Gastrocnemius medialis (tissue), 4 donors: ENCODE measurements at regions of chr4 and their contacts with region 1.

Region 1: DNA sequence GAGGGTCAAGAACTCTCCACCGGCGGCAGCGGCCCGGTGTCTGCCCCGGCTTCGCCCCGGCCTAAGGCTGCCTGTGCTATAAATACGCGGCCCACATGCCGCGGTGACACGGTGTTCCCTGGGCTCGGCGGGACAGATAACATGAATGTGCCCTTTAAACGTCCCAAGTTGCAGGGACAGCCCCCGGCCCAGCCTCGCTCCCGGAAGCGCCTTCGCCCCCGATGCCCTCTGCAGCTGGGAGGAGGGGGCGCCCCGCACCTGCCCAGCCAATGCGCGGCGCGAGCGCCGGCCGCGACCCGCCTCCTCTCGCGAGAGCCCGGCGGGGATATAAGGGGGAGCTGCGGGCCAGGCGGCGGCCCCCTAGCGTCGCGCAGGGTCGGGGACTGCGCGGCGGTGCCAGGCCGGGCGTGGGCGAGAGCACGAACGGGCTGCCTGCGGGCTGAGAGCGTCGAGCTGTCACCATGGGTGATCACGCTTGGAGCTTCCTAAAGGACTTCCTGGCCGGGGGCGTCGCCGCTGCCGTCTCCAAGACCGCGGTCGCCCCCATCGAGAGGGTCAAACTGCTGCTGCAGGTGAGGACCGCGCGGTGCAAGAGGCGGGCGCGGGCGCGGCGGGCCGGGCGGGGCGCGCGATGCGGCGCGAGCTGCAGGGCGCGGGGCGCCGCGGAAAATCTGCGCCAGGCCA is at the start of gene SLC25A4:
- DNase-seq: peak; percentile 82 to 92
- ATAC-seq: peak; percentile 71 to 77
- H3K4me3 ChIP-seq: peak within 1 kb of the TSS; percentile 72 to 81 (median 74)
- H3K27ac ChIP-seq: peak within 1 kb of the TSS; percentile 94 to 99 (median 97)
- H3K4me1 ChIP-seq: peaks cover 74 to 75% of the 10 kb centered on the region in 2 donors
- H3K27me3 ChIP-seq: no peaks in the 10 kb centered on the region
- CTCF ChIP-seq: peak in 4 of 5 experiments; percentile 55 to 77 (median 66)
- POLR2A ChIP-seq: peak; percentile 99 to 100
- total RNA-seq, gene SLC25A4: 360 to 914 (median 389) TPM

Region 2: GRCh38 chr4:184649026-184649970 is 493.8 kb before region 1 on chr4 and contains the starts of genes CASP3 and PRIMPOL:
- in situ Hi-C with region 1: no loop called
- intact Hi-C with region 1: loop called (anchors 1 kb)
- DNase-seq: peak; percentile 93 to 95
- ATAC-seq: peak; percentile 80 to 86
- H3K4me3 ChIP-seq: peak within 1 kb of the TSS; percentile 66 to 98 (median 82)
- H3K27ac ChIP-seq: peak within 1 kb of the TSS; percentile 89 to 100 (median 98)
- H3K4me1 ChIP-seq: peaks cover 46 to 54% of the 10 kb centered on the region in 2 donors
- H3K27me3 ChIP-seq: no peaks in the 10 kb centered on the region
- CTCF ChIP-seq: peak in 2 of 5 experiments; percentile 29 to 45
- POLR2A ChIP-seq: peak; percentile 86 to 92
- total RNA-seq, gene CASP3: 16.9 to 25.5 (median 20.8) TPM
- total RNA-seq, gene PRIMPOL: 5.9 to 11.1 (median 10.7) TPM

Region 3: GRCh38 chr4:184688447-184688846 is 454.6 kb before region 1 on chr4:
- in situ Hi-C with region 1: no loop called
- intact Hi-C with region 1: no loop called
- DNase-seq: no peak
- ATAC-seq: no peak
- H3K4me3 ChIP-seq: no peak overlapping the region
- H3K27ac ChIP-seq: no peak overlapping the region
- H3K4me1 ChIP-seq: no peaks in the 10 kb centered on the region
- H3K27me3 ChIP-seq: no peaks in the 10 kb centered on the region
- CTCF ChIP-seq: no peak
- POLR2A ChIP-seq: no peak

Region 4: DNA sequence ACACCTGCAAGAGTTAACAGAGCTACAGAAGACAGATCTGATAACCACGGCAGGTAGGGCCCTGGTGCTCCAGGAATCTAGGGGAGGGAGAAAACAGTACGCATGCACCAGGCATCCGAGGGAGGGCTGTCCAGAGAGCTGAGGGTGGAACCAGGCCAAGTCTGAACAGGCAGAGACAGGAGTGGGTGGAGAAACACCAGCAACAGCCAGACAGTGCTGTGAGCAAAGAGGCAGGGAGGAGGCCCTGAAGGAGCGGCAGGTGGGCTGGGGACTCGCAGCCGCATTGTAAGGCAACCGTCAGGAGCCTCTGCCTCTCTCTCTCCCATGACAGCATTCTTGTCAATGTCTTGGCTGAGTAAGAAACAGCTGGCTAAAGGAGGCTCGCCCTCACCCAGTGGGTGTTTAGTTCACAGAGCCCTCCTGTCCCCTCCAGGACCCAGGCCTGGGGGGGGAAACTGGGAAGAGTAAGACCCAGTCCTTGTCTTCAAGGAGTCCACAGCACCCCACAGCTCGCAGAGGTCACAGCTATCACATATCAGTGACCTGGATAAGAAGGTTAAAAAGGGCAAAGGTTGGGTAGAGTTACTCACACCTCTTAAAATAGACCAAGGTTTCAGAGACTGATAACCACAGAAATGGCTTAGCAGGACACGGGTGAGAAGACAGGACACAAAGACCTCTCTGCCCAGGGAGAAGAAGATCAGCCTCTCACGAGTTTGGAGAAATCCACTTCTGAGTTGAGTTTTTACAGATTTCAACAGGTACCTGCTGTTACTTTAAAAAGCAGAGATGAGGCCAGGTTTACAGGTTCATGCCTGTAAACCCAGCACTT is 327.8 kb before region 1 on chr4:
- in situ Hi-C with region 1: no loop called
- intact Hi-C with region 1: loop called (anchors 5 kb)
- DNase-seq: peak; percentile 89 to 96
- ATAC-seq: peak; percentile 33 to 41
- H3K4me3 ChIP-seq: peak overlapping the region; percentile 32 to 55 (median 46)
- H3K27ac ChIP-seq: peak overlapping the region; percentile 97 to 100 (median 98)
- H3K4me1 ChIP-seq: peaks cover 65 to 80% of the 10 kb centered on the region in 2 donors
- H3K27me3 ChIP-seq: no peaks in the 10 kb centered on the region
- CTCF ChIP-seq: no peak
- POLR2A ChIP-seq: no peak

Region 5: DNA sequence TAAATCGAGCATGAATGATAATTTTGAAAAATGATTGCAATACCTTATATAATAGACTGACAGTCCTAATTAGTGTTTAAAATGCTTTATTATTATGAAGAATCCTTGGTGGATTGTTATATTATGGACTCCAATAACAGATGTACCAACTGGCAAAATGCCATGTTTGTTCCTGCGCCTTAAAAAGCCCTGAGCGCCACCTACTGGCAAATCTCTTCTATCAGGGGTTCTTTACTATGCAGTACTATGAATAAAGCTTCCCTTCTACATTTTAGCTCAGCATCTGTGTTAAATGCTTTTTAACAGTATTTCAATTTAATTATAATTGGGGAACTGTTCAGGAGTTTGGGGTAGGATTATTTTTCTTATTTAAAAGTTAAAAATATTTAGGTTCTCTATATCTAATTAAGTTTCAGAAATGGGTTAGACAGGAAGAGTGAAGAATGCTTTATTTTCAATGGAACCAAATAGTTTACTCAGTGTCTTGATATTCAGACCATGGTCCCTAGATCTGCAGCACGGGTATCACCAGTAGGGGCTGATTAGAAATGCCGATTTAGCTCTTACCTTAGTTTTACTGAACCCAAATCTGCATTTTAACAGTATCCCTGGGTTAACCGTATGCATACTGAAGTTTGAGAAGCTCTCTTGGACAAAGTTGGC is 40.7 kb after region 1 on chr4:
- in situ Hi-C with region 1: no loop called
- intact Hi-C with region 1: loop called (anchors 2 kb)
- DNase-seq: peak; percentile 71 to 73
- ATAC-seq: peak; percentile 77 to 86
- H3K4me3 ChIP-seq: no peak overlapping the region
- H3K27ac ChIP-seq: peak overlapping the region in 1 of 4 donors; percentile 10
- H3K4me1 ChIP-seq: peaks cover 0 to 6% of the 10 kb centered on the region in 2 donors
- H3K27me3 ChIP-seq: no peaks in the 10 kb centered on the region
- CTCF ChIP-seq: peak; percentile 63 to 86 (median 73)
- POLR2A ChIP-seq: no peak

Region 6: DNA sequence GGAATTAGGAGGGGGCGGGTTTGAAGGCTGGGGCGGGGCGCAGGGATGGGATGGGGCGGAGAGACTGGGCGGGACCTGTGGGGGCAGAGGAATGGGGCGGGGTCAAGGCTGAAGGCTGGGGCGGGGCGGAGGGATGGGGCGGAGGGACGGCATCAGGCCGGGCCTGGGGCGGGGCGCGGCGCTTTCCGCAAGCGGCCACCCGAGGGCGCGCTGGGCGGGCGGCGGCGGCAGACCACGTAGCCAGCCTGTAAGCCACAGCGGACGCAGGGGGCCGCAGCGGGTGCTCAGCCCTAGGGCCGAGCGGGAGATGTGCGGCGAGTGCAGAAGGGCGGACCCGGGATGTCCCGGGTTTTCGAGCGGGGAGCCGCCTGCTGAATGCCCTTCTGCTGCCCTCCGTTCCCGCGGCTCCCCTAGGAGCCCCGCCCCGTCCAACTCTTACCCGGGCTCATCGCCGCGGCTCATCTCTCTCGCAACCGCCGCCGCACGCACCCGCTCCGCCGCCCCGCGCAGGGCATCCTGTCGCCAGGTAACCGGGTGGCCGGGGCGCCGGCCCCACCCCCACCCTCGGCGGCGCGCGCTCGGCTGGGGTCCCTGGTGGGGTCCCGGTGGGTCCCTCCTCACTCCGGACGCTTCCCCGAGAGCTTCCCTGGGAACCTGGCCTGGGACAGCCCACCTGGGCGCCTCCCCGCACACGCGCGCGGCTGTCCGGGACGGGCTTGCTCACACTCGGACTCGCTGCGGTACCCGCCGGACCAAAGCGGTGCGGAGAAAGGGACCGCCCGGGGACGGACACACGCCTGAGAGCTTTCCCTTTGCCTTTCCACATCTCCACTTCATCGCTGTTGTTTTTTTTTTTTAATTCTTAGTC is 328.4 kb after region 1 on chr4 and contains the start of gene CCDC110:
- in situ Hi-C with region 1: no loop called
- intact Hi-C with region 1: loop called (anchors 2 kb)
- DNase-seq: peak; percentile 92 to 94
- ATAC-seq: peak; percentile 84 to 88
- H3K4me3 ChIP-seq: peak within 1 kb of the TSS; percentile 74 to 94 (median 83)
- H3K27ac ChIP-seq: peak within 1 kb of the TSS; percentile 79 to 83 (median 80)
- H3K4me1 ChIP-seq: peaks cover 0 to 4% of the 10 kb centered on the region in 2 donors
- H3K27me3 ChIP-seq: no peaks in the 10 kb centered on the region
- CTCF ChIP-seq: peak; percentile 63 to 90 (median 75)
- POLR2A ChIP-seq: peak; percentile 67 to 75
- total RNA-seq, gene CCDC110: 0.97 to 4.1 (median 1.8) TPM